Heart right ventricle (tissue), 16 donors: ENCODE measurements at regions of chr17 and their contacts with region 1.

Region 1: DNA sequence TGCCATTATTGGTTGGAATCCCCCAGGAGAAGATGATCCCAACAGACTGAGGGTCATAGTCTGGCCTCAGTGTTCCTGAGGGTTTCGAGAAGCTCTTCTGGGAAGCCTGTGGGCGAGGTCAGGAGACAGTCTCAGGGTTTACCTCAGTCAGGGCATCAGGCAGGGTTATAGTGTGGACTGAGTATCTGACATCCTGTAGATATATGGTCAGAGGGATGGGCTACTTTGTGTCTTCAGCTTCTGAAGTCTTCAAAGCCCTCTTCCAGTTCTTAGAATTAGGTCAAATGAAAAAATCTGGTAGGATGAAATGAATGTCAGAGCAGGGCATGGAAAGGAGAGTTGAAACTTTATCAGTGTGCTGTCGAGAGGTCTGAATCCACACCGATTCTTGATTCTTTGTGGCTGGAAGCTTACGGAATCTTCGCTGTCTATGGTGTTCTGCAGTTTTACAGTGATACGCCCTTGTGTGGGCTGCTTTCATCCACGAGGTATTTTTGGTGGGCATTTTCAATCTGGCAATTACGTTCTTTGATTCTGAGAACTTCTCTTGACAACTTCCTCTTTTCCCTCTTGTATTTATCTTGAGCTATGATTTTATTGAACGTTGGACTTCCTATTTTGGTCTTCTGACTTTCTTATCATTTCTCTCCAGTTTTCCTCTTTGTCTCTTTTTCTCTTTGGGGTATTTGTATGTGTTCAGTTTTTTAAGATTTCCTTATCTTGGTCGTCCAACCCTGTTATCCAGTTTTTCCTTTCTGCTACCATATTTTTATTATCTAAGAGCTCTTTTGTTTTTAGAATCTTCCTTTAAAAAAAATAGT is 30.4 kb downstream of the BPTF start:
- DNase-seq: no peak
- ATAC-seq: peak in 1 of 8 donors; percentile 29
- H3K4me3 ChIP-seq: no peak overlapping the region
- H3K27ac ChIP-seq: peak overlapping the region in 1 of 10 donors; percentile 16
- H3K4me1 ChIP-seq: peaks cover 0 to 97% (median 70%) of the 10 kb centered on the region in 9 donors
- H3K27me3 ChIP-seq: no peaks in the 10 kb centered on the region
- CTCF ChIP-seq: no peak

Region 2: GRCh38 chr17:68210570-68211315 is 355.0 kb after region 1 on chr17:
- intact Hi-C with region 1: loop called in 3 of 10 experiments (anchors 5 to 10 kb)
- DNase-seq: no peak
- ATAC-seq: no peak
- H3K4me3 ChIP-seq: no peak overlapping the region
- H3K27ac ChIP-seq: no peak overlapping the region
- H3K4me1 ChIP-seq: peaks cover 0 to 23% (median 7%) of the 10 kb centered on the region in 9 donors
- H3K27me3 ChIP-seq: no peaks in the 10 kb centered on the region
- CTCF ChIP-seq: no peak